Activated CD4-positive, alpha-beta T cell treated with anti-CD3 and anti-CD28 coated beads for 36 hours (primary cell): ENCODE measurements at regions of chr20 and their contacts with region 1.

Region 1: DNA sequence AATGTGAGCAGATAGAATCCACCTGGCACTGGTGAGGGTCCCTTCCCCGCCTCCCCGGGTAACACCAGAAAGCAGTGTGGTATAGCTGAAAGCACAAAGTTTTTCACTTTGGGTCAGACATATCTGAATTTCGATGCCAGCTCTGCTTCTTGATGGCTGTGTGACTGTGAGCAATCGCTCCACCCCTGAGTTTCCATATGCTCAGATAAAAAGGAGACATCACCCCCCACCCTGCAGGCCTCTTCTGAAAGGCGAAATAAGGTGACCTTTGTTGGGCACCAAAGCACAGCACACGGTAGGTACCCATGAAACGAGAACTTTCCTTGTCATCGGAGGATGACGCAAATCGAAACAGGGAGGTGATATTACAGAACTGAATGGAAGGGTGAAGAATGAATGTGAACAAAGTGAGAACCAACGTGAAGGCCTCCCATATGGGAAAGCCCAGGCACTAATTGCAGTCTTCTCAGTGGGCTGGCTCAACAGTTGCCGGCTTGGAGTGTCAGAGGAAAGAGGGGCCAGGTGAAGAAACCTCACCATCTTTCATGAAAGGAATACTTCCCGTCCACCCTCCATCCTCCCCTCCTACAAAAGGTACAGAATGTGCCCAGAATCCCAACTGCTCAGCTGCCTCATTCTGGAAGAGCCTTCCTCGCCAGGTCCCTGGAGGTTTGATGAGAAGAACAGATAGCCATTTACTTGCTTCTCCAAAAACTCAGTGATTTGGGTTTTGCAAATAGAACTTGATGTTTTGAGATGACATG is 61.8 kb downstream of the NFATC2 start:
- DNase-seq: peak; percentile 89
- ATAC-seq: peak; percentile 83
- H3K4me3 Mint-ChIP-seq: peak overlapping the region; percentile 59
- H3K27ac Mint-ChIP-seq: peak overlapping the region; percentile 95
- H3K4me1 Mint-ChIP-seq: peaks cover 90% of the 10 kb centered on the region
- H3K27me3 Mint-ChIP-seq: no peaks in the 10 kb centered on the region

Region 2: GRCh38 chr20:49832632-49833327 is 1647.9 kb before region 1 on chr20:
- CTCF ChIA-PET with region 1: no interaction called
- POLR2A ChIA-PET with region 1: no interaction called
- intact Hi-C with region 1: no loop called
- DNase-seq: no peak
- ATAC-seq: no peak
- H3K4me3 Mint-ChIP-seq: no peak overlapping the region
- H3K27ac Mint-ChIP-seq: no peak overlapping the region
- H3K4me1 Mint-ChIP-seq: no peaks in the 10 kb centered on the region
- H3K27me3 Mint-ChIP-seq: no peaks in the 10 kb centered on the region

Region 3: GRCh38 chr20:51091406-51092195 is 389.1 kb before region 1 on chr20:
- CTCF ChIA-PET with region 1: no interaction called
- POLR2A ChIA-PET with region 1: no interaction called
- intact Hi-C with region 1: no loop called
- DNase-seq: no peak
- ATAC-seq: no peak
- H3K4me3 Mint-ChIP-seq: no peak overlapping the region
- H3K27ac Mint-ChIP-seq: no peak overlapping the region
- H3K4me1 Mint-ChIP-seq: peaks cover 11% of the 10 kb centered on the region
- H3K27me3 Mint-ChIP-seq: peaks cover 47% of the 10 kb centered on the region

Region 4: DNA sequence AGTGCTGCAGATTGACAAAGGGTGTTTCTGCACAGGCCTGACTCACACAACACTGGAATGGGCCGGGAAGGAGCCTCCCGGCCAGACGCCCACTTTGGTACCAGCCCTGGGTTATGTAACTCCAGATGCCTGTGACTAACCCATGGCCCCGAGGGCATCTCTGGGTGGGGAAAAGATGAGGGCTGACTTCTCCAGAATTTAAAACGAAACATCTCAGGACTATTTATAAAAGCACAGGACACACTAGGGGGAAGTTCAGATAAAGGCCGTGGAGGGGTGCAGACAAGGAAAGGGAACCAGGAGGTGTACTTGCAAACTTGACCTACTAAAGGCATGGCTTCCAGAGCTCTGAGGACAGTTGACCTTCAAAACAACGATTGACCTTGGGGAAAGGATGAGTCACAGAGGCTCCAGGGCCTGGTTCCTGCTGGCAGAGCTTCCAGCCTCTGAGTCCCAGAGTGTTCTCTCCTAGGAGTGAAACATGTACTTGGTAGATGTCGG is 135.0 kb before region 1 on chr20:
- CTCF ChIA-PET with region 1: no interaction called
- POLR2A ChIA-PET with region 1: no interaction called
- intact Hi-C with region 1: no loop called
- DNase-seq: no peak
- ATAC-seq: no peak
- H3K4me3 Mint-ChIP-seq: no peak overlapping the region
- H3K27ac Mint-ChIP-seq: no peak overlapping the region
- H3K4me1 Mint-ChIP-seq: no peaks in the 10 kb centered on the region
- H3K27me3 Mint-ChIP-seq: peaks cover 2% of the 10 kb centered on the region

Region 5: GRCh38 chr20:51404298-51405060 is 76.2 kb before region 1 on chr20:
- CTCF ChIA-PET with region 1: interaction called, 4 read pairs
- POLR2A ChIA-PET with region 1: interaction called, 6 read pairs
- intact Hi-C with region 1: loop called (anchors 1 to 2 kb)
- DNase-seq: peak; percentile 94
- ATAC-seq: peak; percentile 81
- H3K4me3 Mint-ChIP-seq: peak overlapping the region; percentile 1
- H3K27ac Mint-ChIP-seq: peak overlapping the region; percentile 96
- H3K4me1 Mint-ChIP-seq: peaks cover 89% of the 10 kb centered on the region
- H3K27me3 Mint-ChIP-seq: no peaks in the 10 kb centered on the region

Region 6: GRCh38 chr20:51469578-51470498 is 10.9 kb before region 1 on chr20:
- CTCF ChIA-PET with region 1: interaction called, 11 read pairs
- POLR2A ChIA-PET with region 1: interaction called, 16 read pairs
- intact Hi-C with region 1: loop called (anchors 1 kb)
- DNase-seq: peak; percentile 3
- ATAC-seq: no peak
- H3K4me3 Mint-ChIP-seq: no peak overlapping the region
- H3K27ac Mint-ChIP-seq: peak overlapping the region; percentile 95
- H3K4me1 Mint-ChIP-seq: peaks cover 57% of the 10 kb centered on the region
- H3K27me3 Mint-ChIP-seq: no peaks in the 10 kb centered on the region

Region 7: GRCh38 chr20:51500311-51500710 is 19.6 kb after region 1 on chr20:
- CTCF ChIA-PET with region 1: interaction called, 11 read pairs
- POLR2A ChIA-PET with region 1: interaction called, 29 read pairs
- intact Hi-C with region 1: loop called (anchors 1 kb)
- DNase-seq: peak; percentile 74
- ATAC-seq: peak; percentile 72
- H3K4me3 Mint-ChIP-seq: no peak overlapping the region
- H3K27ac Mint-ChIP-seq: peak overlapping the region; percentile 91
- H3K4me1 Mint-ChIP-seq: peaks cover 82% of the 10 kb centered on the region
- H3K27me3 Mint-ChIP-seq: no peaks in the 10 kb centered on the region

Region 8: GRCh38 chr20:51531141-51531710 is 50.5 kb after region 1 on chr20:
- CTCF ChIA-PET with region 1: interaction called, 4 read pairs
- POLR2A ChIA-PET with region 1: interaction called, 15 read pairs
- intact Hi-C with region 1: loop called (anchors 1 kb)
- DNase-seq: peak; percentile 90
- ATAC-seq: peak; percentile 82
- H3K4me3 Mint-ChIP-seq: peak overlapping the region; percentile 75
- H3K27ac Mint-ChIP-seq: peak overlapping the region; percentile 99
- H3K4me1 Mint-ChIP-seq: peaks cover 99% of the 10 kb centered on the region
- H3K27me3 Mint-ChIP-seq: no peaks in the 10 kb centered on the region

Region 9: DNA sequence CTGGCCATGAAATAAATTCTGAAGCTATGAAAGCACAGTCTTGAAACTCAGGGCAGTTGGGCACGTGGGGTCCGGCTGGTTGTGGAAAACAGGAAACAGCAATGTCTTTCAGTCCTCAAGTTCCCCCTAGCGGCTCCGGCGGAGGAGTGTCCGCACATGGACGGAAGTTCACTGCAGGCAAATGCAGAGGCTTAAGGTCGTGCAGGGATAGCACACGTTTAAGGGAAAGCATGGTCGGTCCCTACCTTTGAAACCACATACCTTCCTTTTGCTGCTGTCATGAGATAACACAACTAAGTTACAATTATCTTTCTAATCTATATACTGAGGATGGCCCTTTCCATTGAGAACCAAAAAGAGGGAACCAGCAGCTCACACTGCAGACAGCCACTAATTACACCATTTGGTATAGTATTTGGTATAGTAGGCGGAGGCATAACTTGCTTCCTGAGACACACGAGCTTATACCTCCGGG is 114.4 kb after region 1 on chr20:
- CTCF ChIA-PET with region 1: interaction called, 13 read pairs
- POLR2A ChIA-PET with region 1: interaction called, 7 read pairs
- intact Hi-C with region 1: loop called (anchors 2 kb)
- DNase-seq: peak; percentile 89
- ATAC-seq: peak; percentile 93
- H3K4me3 Mint-ChIP-seq: no peak overlapping the region
- H3K27ac Mint-ChIP-seq: peak overlapping the region; percentile 72
- H3K4me1 Mint-ChIP-seq: peaks cover 54% of the 10 kb centered on the region
- H3K27me3 Mint-ChIP-seq: no peaks in the 10 kb centered on the region